T-cell (primary cell): ENCODE measurements at regions of chr20 and their contacts with region 1.

Region 1: DNA sequence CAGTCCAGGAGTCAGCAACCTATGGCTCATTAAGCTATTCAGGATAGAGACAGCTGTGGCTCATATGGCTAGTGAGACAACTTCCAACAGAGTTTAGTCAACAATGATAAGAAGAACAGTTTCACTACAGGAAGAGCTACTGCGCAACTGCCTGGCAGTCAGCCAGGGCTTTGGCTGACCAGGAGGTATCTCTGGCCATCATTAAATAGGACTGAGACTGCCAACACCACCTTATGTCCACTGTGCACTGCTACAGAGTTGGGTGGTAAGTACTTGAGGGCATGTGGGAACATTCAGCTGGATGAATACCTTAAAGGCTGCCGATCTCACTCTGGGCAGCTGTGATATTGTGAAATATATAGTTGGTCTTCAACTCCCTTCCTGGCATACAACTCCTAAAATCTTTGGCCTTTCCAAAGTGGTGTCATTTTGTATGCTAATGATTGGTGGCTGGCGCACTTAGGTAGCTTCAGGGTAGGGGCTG is 52.2 kb upstream of the FAM83C start:
- DNase-seq: peak in 2 of 35 experiments; percentile 5 to 6
- ATAC-seq: no peak
- H3K4me3 ChIP-seq: no peak overlapping the region
- H3K4me3 Mint-ChIP-seq: no peak overlapping the region
- H3K27ac ChIP-seq: no peak overlapping the region
- H3K27ac Mint-ChIP-seq: no peak overlapping the region
- H3K4me1 ChIP-seq: no peaks in the 10 kb centered on the region
- H3K4me1 Mint-ChIP-seq: no peaks in the 10 kb centered on the region
- H3K27me3 ChIP-seq: no peaks in the 10 kb centered on the region
- H3K27me3 Mint-ChIP-seq: no peaks in the 10 kb centered on the region

Region 2: DNA sequence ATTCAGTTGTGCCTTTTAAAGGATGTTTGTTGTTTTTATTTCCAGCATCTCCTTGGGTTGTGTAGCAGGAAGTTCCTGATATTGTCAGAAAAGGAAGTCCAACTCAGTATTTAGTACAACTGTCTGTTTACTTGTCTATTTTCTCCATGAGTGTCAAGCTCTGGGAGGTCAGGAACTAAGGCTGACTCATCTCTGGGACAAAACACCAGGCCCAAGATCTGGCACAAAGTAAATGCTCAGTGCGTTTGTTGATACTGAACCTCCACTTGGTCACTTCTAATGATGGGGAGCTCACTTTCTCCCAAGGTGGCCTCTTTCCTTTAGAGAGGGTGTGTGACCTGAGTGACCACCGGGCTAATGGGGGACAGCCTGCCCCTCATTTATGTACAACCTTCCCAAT is 654.9 kb before region 1 on chr20:
- CTCF ChIA-PET with region 1: interaction called in 1 of 2 experiments, 11 read pairs
- POLR2A ChIA-PET with region 1: no interaction called
- DNase-seq: no peak
- ATAC-seq: no peak
- H3K4me3 ChIP-seq: no peak overlapping the region
- H3K4me3 Mint-ChIP-seq: no peak overlapping the region
- H3K27ac ChIP-seq: no peak overlapping the region
- H3K27ac Mint-ChIP-seq: peak overlapping the region in 1 of 2 donors; percentile 48
- H3K4me1 ChIP-seq: no peaks in the 10 kb centered on the region
- H3K4me1 Mint-ChIP-seq: no peaks in the 10 kb centered on the region
- H3K27me3 ChIP-seq: no peaks in the 10 kb centered on the region
- H3K27me3 Mint-ChIP-seq: no peaks in the 10 kb centered on the region